Breast epithelium (tissue), 4 donors: ENCODE measurements at regions of chr3 and their contacts with region 1.

Region 1: DNA sequence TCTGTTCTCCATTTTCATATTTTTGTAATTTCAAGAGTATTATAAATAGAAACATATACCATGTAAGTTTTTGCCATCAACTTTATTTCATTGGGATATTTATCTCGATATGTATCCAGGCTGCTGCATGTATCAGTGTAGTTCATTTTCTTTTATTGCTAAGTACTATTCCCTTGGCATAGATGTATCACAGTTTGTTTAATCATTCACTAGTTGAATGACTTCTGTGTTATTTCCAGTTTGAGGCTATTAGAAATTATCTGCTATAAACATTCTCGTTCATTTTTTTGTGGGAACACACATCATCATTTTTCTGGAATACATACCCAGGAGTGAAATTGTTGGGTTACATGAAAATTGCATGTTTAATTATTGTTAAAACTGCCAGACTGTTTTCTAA is 18.5 kb upstream of the TGFBR2 start:
- DNase-seq: no peak
- H3K4me3 ChIP-seq: no peak overlapping the region
- H3K27ac ChIP-seq: no peak overlapping the region
- H3K4me1 ChIP-seq: peaks cover 0 to 9% of the 10 kb centered on the region in 2 donors
- H3K27me3 ChIP-seq: no peaks in the 10 kb centered on the region
- CTCF ChIP-seq: no peak
- POLR2A ChIP-seq: no peak

Region 2: GRCh38 chr3:30664884-30665283 is 77.0 kb after region 1 on chr3:
- intact Hi-C with region 1: loop called (anchors 2 kb)
- DNase-seq: no peak
- H3K4me3 ChIP-seq: no peak overlapping the region
- H3K27ac ChIP-seq: peak overlapping the region in 1 of 2 donors; percentile 35
- H3K4me1 ChIP-seq: no peaks in the 10 kb centered on the region
- H3K27me3 ChIP-seq: no peaks in the 10 kb centered on the region
- CTCF ChIP-seq: no peak
- POLR2A ChIP-seq: no peak